ENCODE measurements at regions of chr17 and their contacts with region 1.

Region 1: GRCh38 chr17:61412143-61412859 is 12.7 kb downstream of the TBX2 start:
- DNase-seq: no peak
- ATAC-seq: peak; percentile 74
- H3K4me3 ChIP-seq: peak overlapping the region; percentile 63 to 74
- H3K27ac ChIP-seq: peak overlapping the region; percentile 88
- H3K4me1 ChIP-seq: peaks cover 21% of the 10 kb centered on the region
- H3K27me3 ChIP-seq: no peaks in the 10 kb centered on the region
- CTCF ChIP-seq: peak; percentile 99

Region 2: DNA sequence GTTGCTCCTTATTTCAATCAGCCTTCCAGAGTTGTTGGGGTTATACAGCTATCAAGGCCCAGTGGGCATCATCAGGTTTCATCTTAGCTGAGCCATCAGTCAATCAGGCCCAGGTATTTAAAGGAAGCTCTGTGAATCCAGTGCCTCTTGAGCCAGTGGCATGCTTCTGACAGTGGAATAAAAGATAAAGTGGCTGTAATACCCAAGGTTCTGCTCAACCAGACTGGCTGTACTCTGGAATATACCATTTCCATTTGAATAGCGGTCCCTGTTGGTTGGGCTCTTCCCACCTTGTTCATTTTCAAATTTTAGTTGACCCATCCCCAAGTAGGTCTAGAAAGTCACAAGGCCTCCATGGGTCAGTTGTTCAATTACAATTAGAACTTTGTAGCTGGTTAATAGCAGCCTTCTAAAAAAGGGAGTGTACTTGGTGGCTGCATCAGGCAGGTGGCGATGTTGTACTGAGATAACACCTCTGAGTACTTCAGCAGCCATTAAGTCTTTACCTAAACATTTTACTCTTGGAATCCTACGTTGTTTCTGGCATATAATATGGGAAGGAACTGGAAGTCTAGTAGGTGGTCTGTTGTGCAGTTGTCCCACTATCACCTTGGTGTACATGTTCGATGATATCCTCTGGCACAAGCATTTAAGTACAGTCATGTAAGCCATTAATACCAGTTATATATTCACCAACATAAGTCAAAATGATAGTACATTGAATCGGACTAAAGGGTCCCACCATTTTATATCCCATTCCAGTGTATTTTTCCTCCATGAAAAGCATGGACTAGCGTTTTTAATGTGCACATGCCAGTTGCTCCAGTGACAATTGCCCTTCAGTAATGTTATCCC is 440.6 kb before region 1 on chr17:
- CTCF ChIA-PET with region 1: interaction called, 9 read pairs
- POLR2A ChIA-PET with region 1: no interaction called
- in situ Hi-C with region 1: no loop called
- intact Hi-C with region 1: loop called (anchors 5 kb)
- DNase-seq: peak; percentile 18
- ATAC-seq: peak; percentile 80
- H3K4me3 ChIP-seq: no peak overlapping the region
- H3K27ac ChIP-seq: no peak overlapping the region
- H3K4me1 ChIP-seq: no peaks in the 10 kb centered on the region
- H3K27me3 ChIP-seq: no peaks in the 10 kb centered on the region
- CTCF ChIP-seq: peak; percentile 73

Region 3: GRCh38 chr17:61551255-61551742 is 139.0 kb after region 1 on chr17:
- CTCF ChIA-PET with region 1: interaction called, 5 read pairs
- POLR2A ChIA-PET with region 1: no interaction called
- in situ Hi-C with region 1: no loop called
- intact Hi-C with region 1: loop called (anchors 1 kb)
- DNase-seq: no peak
- ATAC-seq: peak; percentile 86
- H3K4me3 ChIP-seq: no peak overlapping the region
- H3K27ac ChIP-seq: peak overlapping the region; percentile 31; the same call in 1 of the 2 replicates
- H3K4me1 ChIP-seq: peaks cover 8% of the 10 kb centered on the region; the same call in 1 of the 2 replicates
- H3K27me3 ChIP-seq: peaks cover 2% of the 10 kb centered on the region; the same call in 1 of the 2 replicates
- CTCF ChIP-seq: peak; percentile 86

Region 4: DNA sequence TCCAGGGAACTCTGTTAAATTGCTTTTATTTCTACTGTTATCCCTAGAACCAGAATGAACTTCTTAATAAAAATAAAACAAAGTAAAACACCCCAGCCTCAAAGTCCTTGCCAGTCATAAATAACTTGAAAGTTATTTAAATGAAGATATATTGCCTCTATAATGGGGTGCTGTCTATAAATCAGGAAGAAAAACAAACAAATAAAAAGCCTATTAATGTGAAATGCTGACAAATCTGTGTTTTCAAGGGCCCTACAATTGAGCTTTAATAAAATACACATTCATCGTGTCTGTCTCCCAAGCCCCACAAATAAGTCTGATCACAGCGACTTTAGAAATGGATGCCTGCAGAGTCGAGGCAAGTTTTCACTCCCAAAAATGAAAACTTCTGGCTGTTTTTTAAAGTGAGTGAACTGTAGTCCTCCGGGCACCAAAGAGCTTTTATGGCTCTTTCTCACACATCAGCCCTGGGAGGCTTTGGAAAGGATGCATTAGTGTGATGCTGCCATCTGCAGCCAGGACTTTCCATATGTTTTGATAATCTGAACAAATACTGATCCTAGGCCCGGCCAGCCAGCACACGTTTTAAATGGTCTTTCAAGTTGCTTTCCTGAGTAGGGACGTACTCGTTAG is 162.4 kb after region 1 on chr17:
- CTCF ChIA-PET with region 1: interaction called, 15 read pairs
- POLR2A ChIA-PET with region 1: no interaction called
- in situ Hi-C with region 1: no loop called
- intact Hi-C with region 1: loop called (anchors 2 kb)
- DNase-seq: no peak
- ATAC-seq: peak; percentile 99
- H3K4me3 ChIP-seq: no peak overlapping the region
- H3K27ac ChIP-seq: no peak overlapping the region
- H3K4me1 ChIP-seq: peaks cover 4% of the 10 kb centered on the region; the same call in 1 of the 2 replicates
- H3K27me3 ChIP-seq: no peaks in the 10 kb centered on the region
- CTCF ChIP-seq: peak; percentile 82

Region 5: GRCh38 chr17:61837175-61838051 is 425.1 kb after region 1 on chr17:
- CTCF ChIA-PET with region 1: interaction called, 3 read pairs
- POLR2A ChIA-PET with region 1: no interaction called
- in situ Hi-C with region 1: no loop called
- intact Hi-C with region 1: loop called (anchors 2 kb)
- DNase-seq: peak; percentile 12
- ATAC-seq: peak; percentile 87; the same call in 1 of the 2 replicates
- H3K4me3 ChIP-seq: no peak overlapping the region
- H3K27ac ChIP-seq: no peak overlapping the region
- H3K4me1 ChIP-seq: peaks cover 12% of the 10 kb centered on the region; the same call in 1 of the 2 replicates
- H3K27me3 ChIP-seq: no peaks in the 10 kb centered on the region
- CTCF ChIP-seq: peak; percentile 82; the same call in 1 of the 2 replicates

Measured in Panc1 (cell line).